ENCODE measurements at regions of chr1 and their contacts with region 1.

Region 1: DNA sequence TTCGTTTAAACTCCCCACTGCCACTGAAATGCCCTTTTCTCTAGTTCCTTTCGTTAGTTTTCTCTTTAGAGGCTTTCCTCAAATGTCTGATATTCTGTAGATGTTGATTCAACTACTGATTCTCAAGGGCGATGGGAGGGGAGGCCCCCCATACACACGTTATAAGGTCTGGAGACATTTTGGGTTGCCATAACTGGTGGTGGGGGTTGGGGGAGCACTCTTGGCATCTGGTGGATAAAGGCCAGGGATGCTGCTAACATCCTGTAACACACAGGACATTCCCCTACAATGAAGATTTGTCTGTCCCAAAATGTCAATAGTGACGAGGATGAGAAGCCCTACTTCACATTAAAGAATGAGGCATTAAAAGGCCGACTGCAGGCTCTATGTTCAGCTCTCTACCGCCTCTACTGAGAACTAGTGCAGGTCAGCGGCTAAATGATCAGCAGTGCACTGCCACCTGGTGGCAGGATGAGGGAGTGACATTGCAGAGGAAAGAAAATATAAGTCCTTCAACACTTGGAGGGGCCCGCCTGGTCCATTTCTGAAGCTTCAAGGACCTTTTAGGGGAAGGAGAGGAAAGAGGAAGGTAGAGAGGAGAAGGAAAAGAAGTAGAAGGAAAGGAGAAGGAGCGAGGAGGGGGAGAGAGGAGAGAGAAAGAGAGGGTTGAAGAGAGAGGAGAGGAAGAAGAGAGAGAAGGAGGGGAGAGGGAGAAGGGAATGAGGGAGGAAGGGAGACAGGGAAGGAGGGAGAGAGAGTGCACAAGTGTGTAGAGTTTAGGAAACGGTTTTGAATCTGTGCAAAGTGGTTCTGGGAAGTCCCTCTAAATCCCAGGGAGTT is 29.4 kb downstream of the ALG14 start:
- DNase-seq: peak; percentile 16 to 94
- H3K4me3 ChIP-seq: no peak overlapping the region
- H3K27ac ChIP-seq: peak overlapping the region; percentile 35 to 38
- H3K4me1 ChIP-seq: peaks cover 0 to 11% of the 10 kb centered on the region in 2 donors
- H3K27me3 ChIP-seq: no peaks in the 10 kb centered on the region
- CTCF ChIP-seq: peak; percentile 98 to 99 (median 98)

Region 2: GRCh38 chr1:94522304-94522703 is 521.1 kb before region 1 on chr1:
- intact Hi-C with region 1: loop called (anchors 2 kb)
- DNase-seq: no peak
- H3K4me3 ChIP-seq: no peak overlapping the region
- H3K27ac ChIP-seq: no peak overlapping the region
- H3K4me1 ChIP-seq: no peaks in the 10 kb centered on the region
- H3K27me3 ChIP-seq: no peaks in the 10 kb centered on the region
- CTCF ChIP-seq: peak; percentile 30 to 79 (median 39)

Region 3: DNA sequence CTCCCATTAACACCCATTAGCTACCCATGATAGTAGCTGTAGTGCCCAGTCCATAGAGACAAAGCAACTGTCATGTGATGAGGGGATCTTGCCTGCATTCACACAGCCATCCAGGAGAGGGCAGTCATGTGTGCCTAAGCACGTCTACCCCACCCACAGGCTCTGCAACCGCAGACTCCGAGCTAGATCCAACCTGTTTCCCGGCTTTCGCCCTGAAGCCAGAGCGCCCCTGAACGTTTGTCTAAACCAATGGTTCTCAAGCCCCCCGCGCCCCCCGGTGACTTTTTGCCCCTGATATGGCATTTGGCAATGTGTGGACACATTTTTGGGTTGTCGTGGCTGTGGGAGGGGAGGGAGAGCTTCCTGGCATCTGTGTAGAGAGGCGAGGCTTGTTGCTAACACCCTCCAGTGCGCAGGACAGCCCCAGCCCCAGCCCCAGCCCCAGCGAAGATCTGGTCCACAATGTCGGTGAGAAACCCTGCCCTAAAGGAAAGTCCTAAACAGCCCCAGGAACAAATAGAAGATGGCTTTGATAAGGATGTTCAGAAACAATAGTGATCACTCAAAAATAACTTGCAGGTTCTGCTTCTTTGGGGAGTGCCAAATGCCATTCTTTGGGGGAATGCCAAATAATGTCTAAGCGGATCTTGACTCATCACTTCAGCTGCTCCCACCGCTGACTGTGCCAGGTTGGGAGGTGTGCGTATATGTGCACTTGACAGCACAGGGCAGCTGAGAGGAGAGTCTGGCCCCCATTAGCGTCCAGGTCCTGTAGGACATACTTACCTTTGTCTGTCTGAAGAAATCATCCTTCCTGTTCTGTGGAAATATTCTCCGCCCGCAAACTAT is 188.7 kb before region 1 on chr1:
- intact Hi-C with region 1: loop called (anchors 1 kb)
- DNase-seq: peak; percentile 67 to 96
- H3K4me3 ChIP-seq: peak overlapping the region; percentile 46 to 61
- H3K27ac ChIP-seq: peak overlapping the region; percentile 68 to 73
- H3K4me1 ChIP-seq: peaks cover 0 to 16% of the 10 kb centered on the region in 2 donors
- H3K27me3 ChIP-seq: no peaks in the 10 kb centered on the region
- CTCF ChIP-seq: peak; percentile 93

Region 4: GRCh38 chr1:95023399-95024043 is 19.8 kb before region 1 on chr1:
- intact Hi-C with region 1: loop called (anchors 2 kb)
- DNase-seq: no peak
- H3K4me3 ChIP-seq: peak overlapping the region in 1 of 2 donors; percentile 17
- H3K27ac ChIP-seq: peak overlapping the region; percentile 78 to 85
- H3K4me1 ChIP-seq: peaks cover 3 to 27% of the 10 kb centered on the region in 2 donors
- H3K27me3 ChIP-seq: no peaks in the 10 kb centered on the region
- CTCF ChIP-seq: no peak

Region 5: GRCh38 chr1:95084317-95085176 is 41.2 kb after region 1 on chr1:
- intact Hi-C with region 1: no loop called
- DNase-seq: no peak
- H3K4me3 ChIP-seq: no peak overlapping the region
- H3K27ac ChIP-seq: peak overlapping the region; percentile 3 to 32
- H3K4me1 ChIP-seq: peaks cover 3 to 17% of the 10 kb centered on the region in 2 donors
- H3K27me3 ChIP-seq: no peaks in the 10 kb centered on the region
- CTCF ChIP-seq: peak in 2 of 3 experiments; percentile 43 to 56